Esophagus muscularis mucosa (tissue), 4 donors: ENCODE measurements at regions of chr17 and their contacts with region 1.

Region 1: GRCh38 chr17:78112518-78113226 is 15.9 kb downstream of the TMC6 start:
- DNase-seq: no peak
- H3K4me3 ChIP-seq: no peak overlapping the region
- H3K27ac ChIP-seq: no peak overlapping the region
- H3K4me1 ChIP-seq: peaks cover 22 to 55% (median 29%) of the 10 kb centered on the region in 4 donors
- H3K27me3 ChIP-seq: no peaks in the 10 kb centered on the region
- CTCF ChIP-seq: peak; percentile 98 to 100 (median 99)
- EP300 ChIP-seq: no peak
- POLR2A ChIP-seq: no peak

Region 2: GRCh38 chr17:78058001-78058400 is 54.7 kb before region 1 on chr17:
- intact Hi-C with region 1: no loop called
- DNase-seq: no peak
- H3K4me3 ChIP-seq: no peak overlapping the region
- H3K27ac ChIP-seq: peak overlapping the region in 2 of 4 donors; percentile 7 to 54
- H3K4me1 ChIP-seq: peaks cover 15 to 28% (median 26%) of the 10 kb centered on the region in 4 donors
- H3K27me3 ChIP-seq: no peaks in the 10 kb centered on the region
- CTCF ChIP-seq: no peak
- EP300 ChIP-seq: no peak
- POLR2A ChIP-seq: no peak

Region 3: GRCh38 chr17:78174346-78174869 is 61.7 kb after region 1 on chr17:
- intact Hi-C with region 1: loop called (anchors 5 kb)
- DNase-seq: peak; percentile 95
- H3K4me3 ChIP-seq: no peak overlapping the region
- H3K27ac ChIP-seq: peak overlapping the region; percentile 83 to 98 (median 90)
- H3K4me1 ChIP-seq: peaks cover 74 to 100% (median 99%) of the 10 kb centered on the region in 4 donors
- H3K27me3 ChIP-seq: no peaks in the 10 kb centered on the region
- CTCF ChIP-seq: peak; percentile 52 to 77 (median 76)
- EP300 ChIP-seq: no peak
- POLR2A ChIP-seq: no peak